Activated B cell treated with CpG ODN at 0.5 μM for 24 hours (primary cell): ENCODE measurements at regions of chr7 and their contacts with region 1.

Region 1: DNA sequence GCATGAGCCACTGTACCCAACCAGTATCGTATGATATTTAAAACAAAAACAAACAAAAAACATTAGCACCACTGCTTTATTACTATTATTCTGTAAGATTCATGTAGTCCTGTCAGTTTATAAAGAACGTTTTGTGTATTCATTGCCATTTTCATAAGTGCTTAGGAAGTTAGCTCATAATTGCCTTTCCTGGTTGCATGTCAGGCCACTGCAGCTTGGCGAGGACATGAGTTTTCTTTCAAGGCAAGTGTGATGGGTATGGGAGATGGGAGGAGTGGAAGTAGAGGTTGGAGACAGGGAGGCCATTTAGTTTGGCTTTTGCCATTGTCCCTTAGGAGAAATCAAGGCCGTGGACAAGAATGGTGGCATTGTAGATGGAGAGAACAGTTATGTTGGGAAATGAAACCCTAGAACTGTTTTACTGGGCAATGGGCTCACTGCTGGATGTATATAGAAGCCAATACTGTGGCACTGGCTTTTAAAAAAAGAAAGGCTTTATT is 48.9 kb downstream of the TYW1 start:
- DNase-seq: no peak
- ATAC-seq: no peak
- H3K4me3 Mint-ChIP-seq: no peak overlapping the region
- H3K27ac Mint-ChIP-seq: no peak overlapping the region
- H3K4me1 Mint-ChIP-seq: no peaks in the 10 kb centered on the region
- H3K27me3 Mint-ChIP-seq: no peaks in the 10 kb centered on the region
- CTCF ChIP-seq: no peak

Region 2: GRCh38 chr7:67302113-67303039 is 256.8 kb after region 1 on chr7:
- CTCF ChIA-PET with region 1: interaction called, 4 read pairs
- POLR2A ChIA-PET with region 1: interaction called, 3 read pairs
- intact Hi-C with region 1: loop called (anchors 10 kb)
- DNase-seq: peak; percentile 95
- ATAC-seq: peak; percentile 86
- H3K4me3 Mint-ChIP-seq: peak overlapping the region; percentile 93
- H3K27ac Mint-ChIP-seq: peak overlapping the region; percentile 94
- H3K4me1 Mint-ChIP-seq: peaks cover 31% of the 10 kb centered on the region
- H3K27me3 Mint-ChIP-seq: no peaks in the 10 kb centered on the region
- CTCF ChIP-seq: no peak